ENCODE measurements at regions of chr3 and their contacts with region 1.

Region 1: DNA sequence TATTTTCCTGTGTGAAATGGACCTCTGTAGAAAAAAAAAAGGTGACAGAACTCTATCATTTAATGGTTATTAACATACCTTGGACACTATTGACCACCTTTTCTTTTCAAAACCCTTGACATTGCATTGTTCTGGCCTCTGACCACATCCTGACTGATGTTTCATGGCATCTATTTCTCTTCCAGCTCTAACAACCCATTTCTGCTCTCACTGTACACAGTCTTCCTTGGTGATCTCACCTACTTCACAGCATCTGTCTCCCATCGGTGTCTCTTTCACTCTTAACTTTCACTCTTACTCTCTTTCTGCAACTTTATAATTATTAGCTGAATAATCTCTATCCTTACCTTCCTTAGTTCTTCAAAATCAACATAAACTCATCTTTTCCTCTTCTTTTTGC is 217.4 kb upstream of the CD96 start:
- DNase-seq: no peak
- ATAC-seq: peak; percentile 34
- H3K4me3 ChIP-seq: peak overlapping the region; percentile 40
- H3K4me3 Mint-ChIP-seq: peak overlapping the region; percentile 6 to 84 (median 76)
- H3K27ac ChIP-seq: no peak overlapping the region
- H3K27ac Mint-ChIP-seq: peak overlapping the region; percentile 74 to 88 (median 84)
- H3K4me1 ChIP-seq: peaks cover 11 to 16% of the 10 kb centered on the region in 2 donors
- H3K4me1 Mint-ChIP-seq: peaks cover 23 to 40% (median 34%) of the 10 kb centered on the region in 7 donors
- H3K27me3 ChIP-seq: no peaks in the 10 kb centered on the region
- H3K27me3 Mint-ChIP-seq: no peaks in the 10 kb centered on the region

Region 2: GRCh38 chr3:111068574-111068973 is 256.1 kb before region 1 on chr3:
- CTCF ChIA-PET with region 1: no interaction called
- POLR2A ChIA-PET with region 1: no interaction called
- intact Hi-C with region 1: no loop called
- DNase-seq: no peak
- ATAC-seq: no peak
- H3K4me3 ChIP-seq: no peak overlapping the region
- H3K4me3 Mint-ChIP-seq: no peak overlapping the region
- H3K27ac ChIP-seq: no peak overlapping the region
- H3K27ac Mint-ChIP-seq: peak overlapping the region in 1 of 9 donors; percentile 28
- H3K4me1 ChIP-seq: peaks cover 9% of the 10 kb centered on the region in 2 donors
- H3K4me1 Mint-ChIP-seq: peaks cover 23 to 26% (median 25%) of the 10 kb centered on the region in 7 donors
- H3K27me3 ChIP-seq: no peaks in the 10 kb centered on the region
- H3K27me3 Mint-ChIP-seq: peaks cover 9 to 38% (median 10%) of the 10 kb centered on the region in 5 donors

Region 3: DNA sequence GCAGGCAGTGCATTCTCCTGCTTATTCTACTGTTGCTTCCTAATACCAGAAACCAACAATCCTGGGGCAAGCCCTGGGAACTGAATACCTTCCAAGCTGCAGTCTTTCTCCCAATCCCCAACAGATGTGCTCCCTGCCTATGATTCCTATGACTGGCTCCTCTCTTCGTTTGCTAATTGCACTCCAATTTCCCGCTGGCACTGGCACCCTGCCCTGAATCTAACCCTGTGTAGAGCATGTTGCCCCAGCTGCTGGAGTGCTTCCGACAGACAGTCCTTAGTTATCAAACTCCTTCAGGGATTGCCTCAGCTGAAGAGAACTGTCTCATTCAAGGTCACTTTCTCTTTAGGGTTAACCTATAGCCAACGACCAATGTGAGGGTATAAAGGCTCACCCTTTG is 39.0 kb before region 1 on chr3:
- CTCF ChIA-PET with region 1: no interaction called
- POLR2A ChIA-PET with region 1: no interaction called
- intact Hi-C with region 1: loop called in 1 of 2 experiments (anchors 2 kb)
- DNase-seq: no peak
- ATAC-seq: no peak
- H3K4me3 ChIP-seq: no peak overlapping the region
- H3K4me3 Mint-ChIP-seq: no peak overlapping the region
- H3K27ac ChIP-seq: no peak overlapping the region
- H3K27ac Mint-ChIP-seq: no peak overlapping the region
- H3K4me1 ChIP-seq: peaks cover 0 to 12% of the 10 kb centered on the region in 2 donors
- H3K4me1 Mint-ChIP-seq: peaks cover 3 to 38% (median 26%) of the 10 kb centered on the region in 7 donors
- H3K27me3 ChIP-seq: no peaks in the 10 kb centered on the region
- H3K27me3 Mint-ChIP-seq: peaks cover 0 to 1% (median 0%) of the 10 kb centered on the region in 5 donors

Region 4: DNA sequence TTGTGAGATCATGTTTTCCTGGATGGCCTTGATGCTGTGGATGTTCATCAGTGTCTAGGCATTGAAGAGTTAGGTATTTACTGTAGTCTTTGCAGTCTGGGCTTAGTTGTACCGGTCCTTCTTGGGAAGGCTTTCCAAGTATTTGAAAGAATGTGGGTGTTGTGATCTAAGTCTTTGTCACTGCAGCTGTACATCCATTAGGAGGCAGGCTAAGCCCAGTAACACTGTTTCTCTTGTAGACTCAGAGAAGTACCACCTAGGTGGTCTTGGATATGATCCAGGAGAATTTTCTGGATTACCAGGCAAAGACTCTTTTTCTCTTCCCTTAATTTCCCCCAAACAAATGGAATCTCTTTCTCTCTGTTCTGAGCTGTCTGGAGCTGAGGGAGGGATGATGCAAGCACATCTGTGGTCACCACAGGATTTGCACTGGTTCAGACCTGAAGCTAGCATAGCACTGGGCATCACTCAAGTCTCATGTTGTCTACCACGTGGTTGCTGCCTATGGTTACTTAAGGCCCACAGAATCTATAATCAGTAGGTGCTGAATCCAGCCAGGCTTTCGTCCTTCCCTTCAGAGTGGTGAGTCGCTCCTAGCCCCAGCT is 25.5 kb before region 1 on chr3:
- CTCF ChIA-PET with region 1: no interaction called
- POLR2A ChIA-PET with region 1: no interaction called
- intact Hi-C with region 1: no loop called
- DNase-seq: no peak
- ATAC-seq: no peak
- H3K4me3 ChIP-seq: no peak overlapping the region
- H3K4me3 Mint-ChIP-seq: no peak overlapping the region
- H3K27ac ChIP-seq: no peak overlapping the region
- H3K27ac Mint-ChIP-seq: no peak overlapping the region
- H3K4me1 ChIP-seq: no peaks in the 10 kb centered on the region
- H3K4me1 Mint-ChIP-seq: peaks cover 9 to 62% (median 17%) of the 10 kb centered on the region in 7 donors
- H3K27me3 ChIP-seq: no peaks in the 10 kb centered on the region
- H3K27me3 Mint-ChIP-seq: peaks cover 0 to 5% (median 3%) of the 10 kb centered on the region in 5 donors

Region 5: DNA sequence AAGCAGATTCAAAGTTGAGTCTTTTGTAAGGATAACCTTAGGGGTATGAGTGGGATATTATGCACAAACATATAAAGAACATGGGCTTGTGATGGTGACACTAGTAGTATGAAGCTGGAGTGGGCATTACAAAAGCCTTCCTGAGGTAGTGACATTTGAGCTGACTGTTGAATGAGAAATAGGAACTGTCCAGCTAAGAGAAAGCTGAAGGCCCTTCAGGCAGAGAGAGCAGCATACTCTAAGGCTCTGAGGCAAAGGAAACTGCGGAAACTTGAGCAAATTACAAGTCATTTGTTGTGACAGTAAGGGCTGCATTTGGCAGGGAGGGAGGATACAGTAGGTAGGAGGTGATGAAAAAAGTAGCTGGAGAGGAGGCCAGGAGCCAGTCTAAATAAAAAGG is 26.7 kb after region 1 on chr3:
- CTCF ChIA-PET with region 1: no interaction called
- POLR2A ChIA-PET with region 1: no interaction called
- intact Hi-C with region 1: no loop called
- DNase-seq: no peak
- ATAC-seq: no peak
- H3K4me3 ChIP-seq: no peak overlapping the region
- H3K4me3 Mint-ChIP-seq: no peak overlapping the region
- H3K27ac ChIP-seq: no peak overlapping the region
- H3K27ac Mint-ChIP-seq: peak overlapping the region in 1 of 9 donors; percentile 16
- H3K4me1 ChIP-seq: no peaks in the 10 kb centered on the region
- H3K4me1 Mint-ChIP-seq: no peaks in the 10 kb centered on the region
- H3K27me3 ChIP-seq: no peaks in the 10 kb centered on the region
- H3K27me3 Mint-ChIP-seq: peaks cover 0 to 3% (median 0%) of the 10 kb centered on the region in 5 donors